ENCODE measurements at regions of chr12 and their contacts with region 1.

Region 1: GRCh38 chr12:52082988-52083637 is 3.6 kb downstream of the SMIM41 start:
- DNase-seq: peak; percentile 73
- ATAC-seq: peak; percentile 92
- H3K4me3 Mint-ChIP-seq: no peak overlapping the region
- H3K27ac Mint-ChIP-seq: no peak overlapping the region
- H3K4me1 Mint-ChIP-seq: peaks cover 9% of the 10 kb centered on the region
- H3K27me3 Mint-ChIP-seq: peaks cover 8% of the 10 kb centered on the region
- CTCF ChIP-seq: peak; percentile 97

Region 2: GRCh38 chr12:51994959-51995358 is 88.2 kb before region 1 on chr12:
- CTCF ChIA-PET with region 1: interaction called, 10 read pairs
- POLR2A ChIA-PET with region 1: no interaction called
- intact Hi-C with region 1: no loop called
- DNase-seq: no peak
- ATAC-seq: no peak
- H3K4me3 Mint-ChIP-seq: no peak overlapping the region
- H3K27ac Mint-ChIP-seq: no peak overlapping the region
- H3K4me1 Mint-ChIP-seq: peaks cover 12% of the 10 kb centered on the region
- H3K27me3 Mint-ChIP-seq: no peaks in the 10 kb centered on the region
- CTCF ChIP-seq: no peak

Region 3: GRCh38 chr12:52032804-52033502 is 50.2 kb before region 1 on chr12:
- CTCF ChIA-PET with region 1: interaction called, 394 read pairs
- POLR2A ChIA-PET with region 1: interaction called, 4 read pairs
- intact Hi-C with region 1: no loop called
- DNase-seq: peak; percentile 96
- ATAC-seq: peak; percentile 93
- H3K4me3 Mint-ChIP-seq: peak overlapping the region; percentile 75
- H3K27ac Mint-ChIP-seq: peak overlapping the region; percentile 88
- H3K4me1 Mint-ChIP-seq: peaks cover 41% of the 10 kb centered on the region
- H3K27me3 Mint-ChIP-seq: no peaks in the 10 kb centered on the region
- CTCF ChIP-seq: no peak

Region 4: GRCh38 chr12:52050761-52051541 is 32.2 kb before region 1 on chr12 and contains the start of gene NR4A1:
- CTCF ChIA-PET with region 1: interaction called, 10 read pairs
- POLR2A ChIA-PET with region 1: interaction called, 4 read pairs
- intact Hi-C with region 1: no loop called
- DNase-seq: peak; percentile 99
- ATAC-seq: peak; percentile 93
- H3K4me3 Mint-ChIP-seq: peak within 1 kb of the TSS; percentile 95
- H3K27ac Mint-ChIP-seq: peak within 1 kb of the TSS; percentile 93
- H3K4me1 Mint-ChIP-seq: peaks cover 39% of the 10 kb centered on the region
- H3K27me3 Mint-ChIP-seq: no peaks in the 10 kb centered on the region
- CTCF ChIP-seq: no peak
- total RNA-seq, gene NR4A1: 120 to 128 TPM